ENCODE measurements at regions of chr19 and their contacts with region 1.

Region 1: DNA sequence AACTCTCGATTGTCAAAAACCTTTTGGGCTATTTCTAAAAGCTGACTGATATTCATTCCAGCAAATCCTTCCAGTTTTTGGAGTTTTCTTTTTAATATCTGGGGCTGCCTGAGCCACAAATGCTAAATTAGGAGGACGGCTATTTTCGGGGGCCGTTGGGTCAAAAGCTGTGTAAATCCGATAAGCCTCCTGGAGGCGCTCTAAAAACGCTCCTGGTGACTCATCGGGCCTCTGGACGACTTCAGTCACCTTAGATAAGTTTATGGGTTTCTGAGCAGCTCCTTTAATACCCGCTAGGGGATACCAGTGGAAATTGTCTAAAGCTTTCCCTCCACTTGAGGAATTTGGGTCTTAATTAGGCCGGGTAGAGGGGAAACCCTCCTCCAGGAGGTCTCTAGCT is 66.4 kb downstream of the ZNF730 start:
- DNase-seq: no peak
- H3K4me3 ChIP-seq: no peak overlapping the region
- H3K27ac ChIP-seq: no peak overlapping the region
- H3K4me1 ChIP-seq: no peaks in the 10 kb centered on the region
- H3K27me3 ChIP-seq: no peaks in the 10 kb centered on the region
- CTCF ChIP-seq: no peak
- POLR2A ChIP-seq: no peak

Region 2: DNA sequence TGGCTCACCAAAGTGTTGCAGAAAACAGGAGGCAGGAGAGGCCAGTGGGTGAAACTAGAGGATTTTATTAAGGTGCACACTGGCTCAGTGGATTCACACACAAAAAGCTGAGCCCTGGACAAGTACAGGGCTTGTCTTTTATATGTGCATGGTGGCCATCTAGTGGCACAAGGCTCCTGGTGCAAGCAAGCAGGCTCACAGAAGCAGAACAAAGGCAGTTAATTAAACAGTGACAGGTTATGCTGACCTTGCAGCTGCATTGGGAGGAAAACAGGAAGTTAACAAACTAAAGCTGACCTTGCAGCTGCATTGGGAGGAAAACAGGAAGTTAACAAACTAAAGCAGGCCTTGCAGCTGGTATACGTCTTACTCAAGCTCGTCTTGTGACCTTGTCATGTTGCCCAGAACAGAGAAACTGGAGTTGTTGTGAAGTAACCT is 640.7 kb after region 1 on chr19:
- intact Hi-C with region 1: loop called (anchors 10 kb)
- DNase-seq: peak; percentile 72
- H3K4me3 ChIP-seq: no peak overlapping the region
- H3K27ac ChIP-seq: no peak overlapping the region
- H3K4me1 ChIP-seq: no peaks in the 10 kb centered on the region
- H3K27me3 ChIP-seq: no peaks in the 10 kb centered on the region
- CTCF ChIP-seq: peak in 1 of 3 experiments; percentile 46
- POLR2A ChIP-seq: no peak